GM12878 (cell line): ENCODE measurements at regions of chr6 and their contacts with region 1.

Region 1: GRCh38 chr6:47413752-47414422 is 63.7 kb upstream of the CD2AP start:
- DNase-seq: peak; percentile 60
- ATAC-seq: peak; percentile 91
- H3K4me3 ChIP-seq: peak overlapping the region; percentile 64
- H3K27ac ChIP-seq: peak overlapping the region; percentile 71
- H3K4me1 ChIP-seq: 0 out of 2 replicates have a peak, but pooled peaks cover 3% of the 10 kb centered on the region
- H3K27me3 ChIP-seq: no peaks in the 10 kb centered on the region
- CTCF ChIP-seq: peak; percentile 75 to 94 (median 89); a peak in 5 of 6 replicates
- EP300 ChIP-seq: no peak
- POLR2A ChIP-seq: no peak
- RAD21 ChIP-seq: peak; percentile 98

Region 2: GRCh38 chr6:47235964-47236760 is 177.7 kb before region 1 on chr6:
- CTCF ChIA-PET with region 1: no interaction called
- POLR2A ChIA-PET with region 1: no interaction called
- RAD21 ChIA-PET with region 1: no interaction called
- SMC1A ChIA-PET with region 1: no interaction called
- in situ Hi-C with region 1: no loop called
- intact Hi-C with region 1: no loop called
- DNase-seq: no peak
- ATAC-seq: peak; percentile 76
- H3K4me3 ChIP-seq: no peak overlapping the region
- H3K27ac ChIP-seq: no peak overlapping the region
- H3K4me1 ChIP-seq: no peaks in the 10 kb centered on the region
- H3K27me3 ChIP-seq: no peaks in the 10 kb centered on the region
- CTCF ChIP-seq: no peak
- EP300 ChIP-seq: no peak
- POLR2A ChIP-seq: no peak
- RAD21 ChIP-seq: no peak

Region 3: DNA sequence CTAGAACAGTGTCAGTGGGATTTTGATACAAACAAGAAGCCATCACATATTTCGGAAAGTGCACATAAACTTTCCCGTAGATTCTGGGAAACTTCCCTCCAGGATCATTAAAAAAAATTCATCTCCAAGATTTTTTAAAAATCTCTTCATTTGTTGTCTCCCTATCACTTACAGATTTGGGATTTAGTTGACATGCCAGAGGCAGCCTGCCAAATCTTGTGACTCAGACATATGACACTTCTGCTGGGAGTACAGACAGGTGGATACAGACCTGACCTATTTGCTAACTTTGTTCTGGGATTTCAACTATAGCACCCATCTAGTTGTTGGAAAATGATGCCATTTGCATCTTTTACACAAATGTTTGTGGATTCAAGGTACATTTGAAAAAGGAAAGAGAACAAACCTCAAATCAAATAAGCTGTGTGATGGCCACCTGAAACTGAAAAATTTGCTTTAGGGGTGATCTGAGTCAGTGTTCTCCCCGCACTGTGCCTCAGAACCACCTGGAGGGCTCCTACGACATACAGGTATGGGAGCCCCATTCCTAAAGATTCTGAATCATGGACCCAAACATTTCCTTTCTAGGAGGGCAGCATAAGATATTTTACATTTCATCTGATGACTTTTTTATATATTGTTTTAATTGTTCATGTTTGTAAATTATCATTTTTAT is 41.8 kb after region 1 on chr6:
- CTCF ChIA-PET with region 1: interaction called, 7 read pairs
- POLR2A ChIA-PET with region 1: interaction called, 9 read pairs
- RAD21 ChIA-PET with region 1: interaction called, 14 read pairs
- SMC1A ChIA-PET with region 1: interaction called, 15 read pairs
- in situ Hi-C with region 1: no loop called
- intact Hi-C with region 1: loop called (anchors 2 kb)
- DNase-seq: no peak
- ATAC-seq: peak; percentile 87
- H3K4me3 ChIP-seq: peak overlapping the region; percentile 13; the same call in 1 of the 2 replicates
- H3K27ac ChIP-seq: no peak overlapping the region
- H3K4me1 ChIP-seq: peaks cover 25% of the 10 kb centered on the region
- H3K27me3 ChIP-seq: no peaks in the 10 kb centered on the region
- CTCF ChIP-seq: no peak
- EP300 ChIP-seq: no peak
- POLR2A ChIP-seq: no peak
- RAD21 ChIP-seq: no peak

Region 4: DNA sequence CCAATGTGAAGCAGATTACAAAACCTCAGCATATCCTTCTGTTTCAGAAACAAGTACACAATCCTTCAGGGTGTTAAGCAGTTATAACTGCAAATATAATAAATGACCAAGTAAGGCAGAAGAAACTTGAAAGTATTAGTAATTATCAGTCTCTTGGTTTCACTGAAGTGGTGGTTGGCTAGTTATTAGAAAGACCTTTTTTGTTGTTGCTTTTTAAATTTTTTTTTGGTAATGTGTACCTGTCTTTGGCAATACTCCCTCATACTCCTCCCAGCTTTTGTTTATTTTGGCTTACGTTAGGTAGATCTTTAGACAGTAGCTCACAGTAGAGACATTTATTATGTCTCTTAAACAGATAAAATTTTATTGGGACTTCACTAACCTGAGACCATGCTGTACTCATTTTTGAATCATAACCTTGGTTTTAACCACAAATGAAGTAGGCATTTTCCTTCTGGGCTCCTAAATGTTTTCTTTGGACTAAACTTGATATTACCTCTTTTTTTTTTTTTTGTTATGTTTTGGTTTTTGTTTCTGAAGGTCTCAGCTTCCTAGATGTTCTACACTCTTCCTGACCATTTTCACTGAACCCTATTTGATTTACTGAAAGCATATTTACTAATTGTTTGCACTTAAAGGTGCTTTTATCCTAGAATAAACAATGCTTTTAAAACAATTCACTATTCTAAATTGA is 70.1 kb after region 1 on chr6:
- CTCF ChIA-PET with region 1: interaction called, 14 read pairs
- POLR2A ChIA-PET with region 1: interaction called, 11 read pairs
- RAD21 ChIA-PET with region 1: interaction called, 58 read pairs
- SMC1A ChIA-PET with region 1: interaction called, 47 read pairs
- in situ Hi-C with region 1: no loop called
- intact Hi-C with region 1: no loop called
- DNase-seq: no peak
- ATAC-seq: peak; percentile 42
- H3K4me3 ChIP-seq: 0 out of 2 replicates have a peak overlapping the region, but pooled peaks have one; percentile 21
- H3K27ac ChIP-seq: peak overlapping the region; percentile 32; the same call in 1 of the 2 replicates
- H3K4me1 ChIP-seq: peaks cover 10% of the 10 kb centered on the region
- H3K27me3 ChIP-seq: no peaks in the 10 kb centered on the region
- CTCF ChIP-seq: no peak
- EP300 ChIP-seq: no peak
- POLR2A ChIP-seq: no peak
- RAD21 ChIP-seq: no peak

Region 5: GRCh38 chr6:47595797-47596196 is 181.9 kb after region 1 on chr6:
- CTCF ChIA-PET with region 1: interaction called, 5 read pairs
- POLR2A ChIA-PET with region 1: no interaction called
- RAD21 ChIA-PET with region 1: interaction called, 11 read pairs
- SMC1A ChIA-PET with region 1: interaction called, 8 read pairs
- in situ Hi-C with region 1: no loop called
- intact Hi-C with region 1: no loop called
- DNase-seq: no peak
- ATAC-seq: no peak
- H3K4me3 ChIP-seq: no peak overlapping the region
- H3K27ac ChIP-seq: no peak overlapping the region
- H3K4me1 ChIP-seq: no peaks in the 10 kb centered on the region
- H3K27me3 ChIP-seq: no peaks in the 10 kb centered on the region
- CTCF ChIP-seq: no peak
- EP300 ChIP-seq: no peak
- POLR2A ChIP-seq: no peak
- RAD21 ChIP-seq: no peak

Region 6: DNA sequence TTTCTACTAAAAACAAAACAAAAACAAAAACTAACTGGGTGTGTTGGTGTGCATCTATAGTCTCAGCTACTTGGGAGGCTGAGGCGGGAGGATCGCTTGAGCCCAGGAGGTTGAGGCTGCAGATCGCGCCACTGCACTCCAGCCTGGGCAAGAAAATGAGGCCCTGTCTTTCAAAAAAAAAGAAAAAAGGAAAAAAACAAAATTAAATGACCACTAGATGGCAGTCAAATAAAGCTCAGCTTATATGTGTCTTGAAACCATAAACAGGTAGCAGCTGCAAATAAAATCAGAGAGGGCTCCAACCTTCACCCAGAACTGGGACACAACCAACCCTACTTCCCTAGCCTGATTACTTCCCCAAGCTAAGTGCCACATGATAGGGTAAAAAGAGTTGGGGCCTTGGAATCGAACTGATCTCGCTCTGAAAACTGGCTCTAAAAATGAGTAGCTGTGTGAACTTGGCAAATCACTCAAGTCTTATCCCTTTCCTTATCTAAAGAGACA is 217.4 kb after region 1 on chr6:
- CTCF ChIA-PET with region 1: interaction called, 84 read pairs
- POLR2A ChIA-PET with region 1: interaction called, 4 read pairs
- RAD21 ChIA-PET with region 1: interaction called, 47 read pairs
- SMC1A ChIA-PET with region 1: interaction called, 48 read pairs
- in situ Hi-C with region 1: loop called (anchors 10 kb)
- intact Hi-C with region 1: loop called (anchors 1 kb)
- DNase-seq: peak; percentile 32
- ATAC-seq: peak; percentile 79
- H3K4me3 ChIP-seq: no peak overlapping the region
- H3K27ac ChIP-seq: no peak overlapping the region
- H3K4me1 ChIP-seq: no peaks in the 10 kb centered on the region
- H3K27me3 ChIP-seq: no peaks in the 10 kb centered on the region
- CTCF ChIP-seq: peak; percentile 31 to 57 (median 41); a peak in 4 of 6 replicates
- EP300 ChIP-seq: no peak
- POLR2A ChIP-seq: no peak
- RAD21 ChIP-seq: peak; percentile 87

Region 7: GRCh38 chr6:47769982-47770381 is 356.1 kb after region 1 on chr6:
- CTCF ChIA-PET with region 1: no interaction called
- POLR2A ChIA-PET with region 1: no interaction called
- RAD21 ChIA-PET with region 1: no interaction called
- SMC1A ChIA-PET with region 1: interaction called, 3 read pairs
- in situ Hi-C with region 1: loop called (anchors 10 kb)
- intact Hi-C with region 1: no loop called
- DNase-seq: no peak
- ATAC-seq: no peak
- H3K4me3 ChIP-seq: no peak overlapping the region
- H3K27ac ChIP-seq: no peak overlapping the region
- H3K4me1 ChIP-seq: no peaks in the 10 kb centered on the region
- H3K27me3 ChIP-seq: no peaks in the 10 kb centered on the region
- CTCF ChIP-seq: no peak
- EP300 ChIP-seq: no peak
- POLR2A ChIP-seq: no peak
- RAD21 ChIP-seq: no peak

Region 8: DNA sequence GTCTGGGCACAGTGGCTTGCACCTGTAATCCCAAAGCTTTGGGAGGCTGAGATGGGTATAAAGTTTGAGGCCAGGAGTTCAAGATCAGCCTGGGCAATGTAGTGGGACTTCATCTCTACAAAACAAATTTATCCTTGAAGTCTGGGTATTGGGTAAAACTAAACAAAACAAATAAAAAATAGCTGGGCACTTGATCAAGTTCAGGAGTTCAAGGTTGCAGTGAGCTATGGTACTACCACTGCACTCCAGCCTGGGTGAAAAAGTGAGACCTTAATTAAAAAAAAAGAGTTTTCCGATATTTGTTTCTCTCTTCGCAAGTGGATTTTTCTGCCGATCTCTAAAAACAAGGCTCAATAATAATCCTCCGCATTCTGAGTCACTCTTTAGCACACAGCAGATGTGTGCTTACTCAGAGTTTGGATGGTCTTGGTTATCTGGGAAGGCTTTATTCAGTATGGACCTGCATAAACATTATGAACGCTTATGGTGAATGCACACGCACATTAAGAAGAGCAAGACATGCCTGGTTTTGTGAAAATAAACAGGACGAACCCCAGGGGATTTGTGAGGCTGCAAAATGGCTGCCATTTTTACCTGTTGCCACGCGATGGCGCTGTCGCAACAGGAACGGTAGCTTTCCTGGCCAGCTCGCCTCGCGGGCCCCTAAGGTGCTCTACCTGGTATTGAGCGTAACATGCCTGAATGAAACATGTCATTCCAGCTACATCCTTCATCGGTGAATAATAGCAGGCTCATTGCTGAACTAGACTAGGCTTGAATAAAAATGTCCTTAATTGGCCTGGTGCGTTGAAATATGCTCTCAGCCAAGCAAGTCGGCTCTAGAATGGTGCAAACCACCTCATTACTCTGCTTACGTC is 374.0 kb after region 1 on chr6:
- CTCF ChIA-PET with region 1: interaction called, 6 read pairs
- POLR2A ChIA-PET with region 1: no interaction called
- RAD21 ChIA-PET with region 1: no interaction called
- SMC1A ChIA-PET with region 1: interaction called, 18 read pairs
- in situ Hi-C with region 1: no loop called
- intact Hi-C with region 1: no loop called
- DNase-seq: no peak
- ATAC-seq: peak; percentile 96
- H3K4me3 ChIP-seq: no peak overlapping the region
- H3K27ac ChIP-seq: no peak overlapping the region
- H3K4me1 ChIP-seq: no peaks in the 10 kb centered on the region
- H3K27me3 ChIP-seq: peaks cover 0 to 2% of the 10 kb centered on the region in 2 experiments; a peak in 1 of 4 replicates
- CTCF ChIP-seq: peak; percentile 88 to 94 (median 93); a peak in 5 of 6 replicates
- EP300 ChIP-seq: no peak
- POLR2A ChIP-seq: no peak
- RAD21 ChIP-seq: peak; percentile 92

Region 9: GRCh38 chr6:48116699-48117645 is 703.1 kb after region 1 on chr6:
- CTCF ChIA-PET with region 1: no interaction called
- POLR2A ChIA-PET with region 1: no interaction called
- RAD21 ChIA-PET with region 1: no interaction called
- SMC1A ChIA-PET with region 1: no interaction called
- in situ Hi-C with region 1: no loop called
- intact Hi-C with region 1: no loop called
- DNase-seq: no peak
- ATAC-seq: no peak
- H3K4me3 ChIP-seq: no peak overlapping the region
- H3K27ac ChIP-seq: no peak overlapping the region
- H3K4me1 ChIP-seq: no peaks in the 10 kb centered on the region
- H3K27me3 ChIP-seq: no peaks in the 10 kb centered on the region
- CTCF ChIP-seq: no peak
- EP300 ChIP-seq: no peak
- POLR2A ChIP-seq: no peak
- RAD21 ChIP-seq: no peak